BJ (cell line): ENCODE measurements at regions of chr17 and their contacts with region 1.

Region 1: GRCh38 chr17:81601525-81602120 is 35.3 kb downstream of the NPLOC4 start:
- DNase-seq: no peak
- H3K4me3 ChIP-seq: no peak overlapping the region
- H3K27me3 ChIP-seq: no peaks in the 10 kb centered on the region
- CTCF ChIP-seq: peak; percentile 81

Region 2: DNA sequence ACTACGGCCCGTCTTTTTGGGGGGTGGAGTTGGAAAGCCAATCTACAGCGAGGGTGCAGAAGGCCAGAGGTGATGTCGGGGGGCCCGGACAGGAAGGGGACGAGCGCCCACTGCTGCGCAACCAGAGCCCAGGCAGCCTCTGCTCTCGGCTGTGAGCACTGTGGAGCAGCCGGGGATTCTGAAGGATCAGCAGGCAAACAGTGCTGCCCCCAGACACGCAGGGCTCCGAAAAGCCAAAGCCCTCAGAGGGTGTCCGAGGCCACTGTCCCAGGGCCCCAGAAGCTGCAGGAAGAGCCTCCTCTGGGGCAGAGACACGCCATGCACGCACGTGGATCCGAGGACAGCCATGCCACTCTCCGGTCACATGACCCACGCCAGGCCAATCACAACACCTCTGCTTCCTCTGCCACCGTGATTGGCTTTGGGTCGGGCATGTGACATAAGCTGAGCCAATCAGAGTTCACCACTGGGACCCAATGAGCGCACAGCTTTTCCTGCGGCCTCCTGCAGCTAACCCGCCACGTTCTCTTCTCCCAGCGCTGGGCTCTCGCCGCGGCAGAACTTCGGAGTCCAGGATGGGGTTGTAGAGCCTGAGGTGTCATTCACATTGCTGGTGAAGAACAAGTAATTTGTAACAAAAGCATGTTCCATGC is 129.7 kb before region 1 on chr17:
- CTCF ChIA-PET with region 1: no interaction called
- POLR2A ChIA-PET with region 1: no interaction called
- DNase-seq: peak; percentile 76
- H3K4me3 ChIP-seq: peak overlapping the region; percentile 22
- H3K27me3 ChIP-seq: no peaks in the 10 kb centered on the region; the same call in 1 of the 2 replicates
- CTCF ChIP-seq: peak; percentile 77

Region 3: DNA sequence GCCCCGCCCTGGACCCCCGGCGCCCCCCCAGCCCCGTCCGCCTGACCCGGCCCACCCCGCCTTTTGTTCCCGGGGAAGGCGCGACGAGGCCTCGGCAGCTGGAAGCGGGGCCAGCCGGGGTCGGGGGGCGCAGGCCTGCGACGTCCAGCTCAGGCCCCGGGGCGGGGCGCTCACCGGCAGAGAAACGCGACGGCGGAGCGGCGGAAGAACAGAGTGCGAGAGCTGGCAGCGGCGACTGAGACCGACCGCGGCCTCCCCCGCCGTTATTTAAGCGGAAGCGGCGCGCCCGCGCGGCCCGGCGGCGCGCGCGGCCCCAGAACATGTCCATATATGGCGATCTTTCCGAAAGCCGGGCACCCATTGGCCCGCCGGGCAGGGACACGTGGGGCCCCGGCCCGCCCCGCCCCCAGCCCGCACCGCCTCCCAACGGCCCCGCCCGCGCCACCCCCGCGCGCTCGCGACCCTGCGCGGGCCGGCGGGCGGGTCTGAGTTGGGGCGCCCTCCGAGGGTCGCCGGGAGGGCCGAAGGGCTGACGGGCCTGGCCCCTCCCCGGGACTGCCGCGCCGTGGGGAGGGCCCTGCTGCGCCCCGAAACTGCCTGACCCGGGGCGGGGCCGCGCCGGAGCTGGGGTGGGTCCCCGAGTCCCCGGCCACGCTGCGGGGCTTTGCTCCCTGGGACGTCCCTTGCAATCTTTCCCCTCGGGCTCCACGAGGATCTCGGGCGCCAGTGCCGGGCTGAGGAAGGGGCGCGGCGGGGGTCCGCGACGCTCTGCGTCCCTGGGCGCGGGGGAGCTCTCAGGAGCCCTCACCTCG is 88.9 kb before region 1 on chr17 and contains the start of gene ACTG1:
- CTCF ChIA-PET with region 1: interaction called, 30 read pairs
- POLR2A ChIA-PET with region 1: interaction called, 3 read pairs
- DNase-seq: peak; percentile 51
- H3K4me3 ChIP-seq: peak within 1 kb of the TSS; percentile 95
- H3K27me3 ChIP-seq: no peaks in the 10 kb centered on the region
- CTCF ChIP-seq: no peak
- polyA plus RNA-seq, gene ACTG1: 2,988 and 3,774 TPM in 2 replicates

Region 4: GRCh38 chr17:81537343-81537855 is 64.2 kb before region 1 on chr17:
- CTCF ChIA-PET with region 1: interaction called, 12 read pairs
- POLR2A ChIA-PET with region 1: no interaction called
- DNase-seq: no peak
- H3K4me3 ChIP-seq: no peak overlapping the region
- H3K27me3 ChIP-seq: peaks cover 2% of the 10 kb centered on the region; the same call in 1 of the 2 replicates
- CTCF ChIP-seq: peak; percentile 60

Region 5: DNA sequence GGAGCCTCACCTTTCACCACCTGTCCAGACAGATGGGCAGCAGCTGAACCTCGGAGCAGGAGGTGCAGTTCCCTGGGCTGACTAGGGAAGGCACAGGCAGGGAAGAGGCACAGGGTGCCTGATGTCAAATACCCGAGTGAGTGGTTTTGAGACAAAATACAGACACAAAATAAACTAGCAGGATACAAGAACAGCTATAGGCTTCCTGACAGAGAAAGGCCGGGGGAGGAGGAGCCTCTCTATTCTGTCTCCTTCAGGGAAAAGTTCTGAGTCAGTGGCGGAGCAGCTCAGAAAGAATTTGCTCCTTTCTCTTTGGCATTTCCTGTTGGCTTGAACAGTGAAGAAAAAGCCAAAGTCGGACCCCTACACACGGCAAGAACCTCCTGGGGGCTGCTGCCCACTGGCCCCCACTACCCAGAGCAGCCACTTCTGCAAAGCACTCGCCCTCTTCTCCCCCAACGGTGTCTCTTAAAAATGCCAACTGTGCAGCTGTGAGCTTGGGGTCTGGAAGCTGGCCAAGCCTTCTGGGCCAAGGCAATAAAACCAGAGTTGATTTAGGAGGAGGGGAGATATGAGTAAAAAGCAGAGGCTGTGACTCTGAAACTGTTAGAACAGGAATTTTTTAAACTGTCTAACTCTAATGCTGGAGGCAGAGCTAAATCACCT is 35.0 kb before region 1 on chr17:
- CTCF ChIA-PET with region 1: interaction called, 35 read pairs
- POLR2A ChIA-PET with region 1: interaction called, 5 read pairs
- DNase-seq: peak; percentile 95
- H3K4me3 ChIP-seq: no peak overlapping the region
- H3K27me3 ChIP-seq: no peaks in the 10 kb centered on the region
- CTCF ChIP-seq: no peak

Region 6: DNA sequence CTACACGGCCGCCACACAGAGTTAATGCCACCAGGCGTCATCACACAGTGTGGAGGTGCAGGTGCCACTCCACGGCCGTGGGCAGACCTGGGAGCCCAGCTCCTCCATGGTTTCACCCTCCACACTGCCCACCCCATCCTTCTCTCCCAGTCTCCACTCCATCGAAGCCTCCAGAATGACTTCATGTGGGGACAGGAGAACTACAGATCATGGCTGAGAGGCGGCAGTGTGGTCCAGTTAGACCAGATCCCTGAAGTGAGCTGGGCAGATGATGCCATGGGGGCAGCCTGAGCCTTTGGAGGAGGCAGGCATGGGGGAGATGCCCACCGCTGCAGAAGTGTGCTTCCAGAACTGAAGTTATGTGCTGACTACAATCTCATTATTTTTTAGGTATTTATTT is 11.5 kb before region 1 on chr17:
- CTCF ChIA-PET with region 1: interaction called, 15 read pairs
- POLR2A ChIA-PET with region 1: no interaction called
- DNase-seq: no peak
- H3K4me3 ChIP-seq: no peak overlapping the region
- H3K27me3 ChIP-seq: no peaks in the 10 kb centered on the region
- CTCF ChIP-seq: no peak